WTC11 (cell line): ENCODE measurements at regions of chr22 and their contacts with region 1.

Region 1: GRCh38 chr22:21001560-21002325 is at the start of gene THAP7:
- DNase-seq: peak; percentile 94
- ATAC-seq: peak; percentile 87
- H3K4me3 Mint-ChIP-seq: peak within 1 kb of the TSS; percentile 87
- H3K27ac Mint-ChIP-seq: peak within 1 kb of the TSS; percentile 97
- H3K4me1 Mint-ChIP-seq: peaks cover 18% of the 10 kb centered on the region
- H3K27me3 Mint-ChIP-seq: no peaks in the 10 kb centered on the region
- CTCF ChIP-seq: no peak
- total RNA-seq, gene THAP7: 18.7 to 23.9 TPM (median 19.3 TPM) in 3 replicates

Region 2: GRCh38 chr22:20833225-20833665 is 168.5 kb before region 1 on chr22:
- CTCF ChIA-PET with region 1: no interaction called
- POLR2A ChIA-PET with region 1: interaction called, 10 read pairs
- DNase-seq: no peak
- ATAC-seq: no peak
- H3K4me3 Mint-ChIP-seq: no peak overlapping the region
- H3K27ac Mint-ChIP-seq: no peak overlapping the region
- H3K4me1 Mint-ChIP-seq: no peaks in the 10 kb centered on the region
- H3K27me3 Mint-ChIP-seq: no peaks in the 10 kb centered on the region
- CTCF ChIP-seq: no peak